ENCODE measurements at regions of chr3 and their contacts with region 1.

Region 1: GRCh38 chr3:187738331-187739093 is 6.8 kb downstream of the BCL6 start:
- DNase-seq: peak; percentile 82
- ATAC-seq: peak; percentile 25
- H3K4me3 Mint-ChIP-seq: peak overlapping the region; percentile 91
- H3K27ac Mint-ChIP-seq: peak overlapping the region; percentile 99
- H3K4me1 Mint-ChIP-seq: peaks cover 47% of the 10 kb centered on the region
- H3K27me3 Mint-ChIP-seq: no peaks in the 10 kb centered on the region

Region 2: DNA sequence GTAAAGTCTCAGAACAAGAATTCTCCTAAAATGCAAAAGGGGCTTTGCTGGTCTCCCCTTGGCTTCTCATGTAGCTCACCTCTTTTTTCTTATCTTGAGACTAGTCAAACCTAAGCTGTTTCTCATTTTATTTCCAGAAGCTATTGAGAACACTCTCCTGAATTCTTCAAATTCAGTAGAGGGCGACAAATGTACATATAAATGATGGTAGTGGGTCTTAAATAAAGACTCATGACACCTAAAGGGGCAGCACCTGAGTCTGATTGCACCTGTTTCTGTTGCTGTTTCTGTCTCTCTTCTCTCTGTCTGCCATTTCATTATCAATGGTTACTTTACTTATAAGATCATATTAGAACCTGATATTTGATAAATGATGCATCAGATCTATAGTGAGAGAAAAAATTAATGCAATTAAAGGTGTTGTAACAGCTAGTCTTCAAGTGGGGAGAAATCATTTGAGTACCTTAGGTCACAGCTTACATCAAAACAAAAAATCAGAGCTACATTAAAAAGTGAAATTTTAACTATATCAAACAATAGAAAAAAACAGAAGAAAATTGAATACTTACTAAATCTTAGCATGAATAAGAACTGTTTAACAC is 889.0 kb before region 1 on chr3:
- CTCF ChIA-PET with region 1: no interaction called
- POLR2A ChIA-PET with region 1: no interaction called
- intact Hi-C with region 1: no loop called
- DNase-seq: peak; percentile 32
- ATAC-seq: peak; percentile 90
- H3K4me3 Mint-ChIP-seq: no peak overlapping the region
- H3K27ac Mint-ChIP-seq: peak overlapping the region; percentile 52
- H3K4me1 Mint-ChIP-seq: peaks cover 18% of the 10 kb centered on the region
- H3K27me3 Mint-ChIP-seq: peaks cover 7% of the 10 kb centered on the region

Region 3: GRCh38 chr3:187974871-187975271 is 236.4 kb after region 1 on chr3:
- CTCF ChIA-PET with region 1: interaction called, 23 read pairs
- POLR2A ChIA-PET with region 1: interaction called, 15 read pairs
- intact Hi-C with region 1: loop called in 1 of 2 experiments (anchors 2 kb)
- DNase-seq: no peak
- ATAC-seq: peak; percentile 61
- H3K4me3 Mint-ChIP-seq: peak overlapping the region; percentile 57
- H3K27ac Mint-ChIP-seq: peak overlapping the region; percentile 90
- H3K4me1 Mint-ChIP-seq: peaks cover 57% of the 10 kb centered on the region
- H3K27me3 Mint-ChIP-seq: no peaks in the 10 kb centered on the region

Region 4: DNA sequence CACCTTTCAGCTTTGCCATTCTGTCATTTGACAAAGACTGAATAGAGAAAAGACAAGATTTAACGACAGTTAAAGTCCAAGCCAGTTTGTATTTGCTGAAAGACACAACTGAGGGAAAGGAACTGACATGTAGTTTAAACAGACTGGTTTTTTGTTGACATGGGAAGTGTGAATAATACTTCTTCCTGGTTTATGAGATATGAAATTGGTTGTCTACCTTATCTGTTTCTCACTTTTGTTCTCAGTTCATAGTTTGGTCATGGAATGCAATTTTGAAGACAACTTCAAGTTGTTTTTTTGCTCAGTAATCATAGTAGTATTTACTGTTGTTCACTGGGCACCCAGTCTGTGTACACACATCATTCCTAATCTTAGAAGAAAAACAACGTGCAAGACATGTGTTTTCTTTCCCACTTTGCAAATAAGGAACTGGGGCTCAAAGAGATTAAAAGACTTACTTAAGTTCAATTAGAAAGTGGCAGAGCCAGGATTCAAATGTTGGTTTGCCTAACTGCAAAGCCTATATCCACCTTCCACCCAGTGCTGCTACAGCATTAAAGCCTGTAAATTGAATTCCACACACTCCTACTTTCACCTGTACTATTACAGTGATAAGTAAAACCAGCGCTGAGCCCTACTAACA is 519.0 kb after region 1 on chr3:
- CTCF ChIA-PET with region 1: interaction called, 21 read pairs
- POLR2A ChIA-PET with region 1: interaction called, 7 read pairs
- intact Hi-C with region 1: loop called in 1 of 2 experiments (anchors 10 kb)
- DNase-seq: no peak
- ATAC-seq: peak; percentile 12
- H3K4me3 Mint-ChIP-seq: no peak overlapping the region
- H3K27ac Mint-ChIP-seq: peak overlapping the region; percentile 62
- H3K4me1 Mint-ChIP-seq: peaks cover 46% of the 10 kb centered on the region
- H3K27me3 Mint-ChIP-seq: no peaks in the 10 kb centered on the region

Region 5: DNA sequence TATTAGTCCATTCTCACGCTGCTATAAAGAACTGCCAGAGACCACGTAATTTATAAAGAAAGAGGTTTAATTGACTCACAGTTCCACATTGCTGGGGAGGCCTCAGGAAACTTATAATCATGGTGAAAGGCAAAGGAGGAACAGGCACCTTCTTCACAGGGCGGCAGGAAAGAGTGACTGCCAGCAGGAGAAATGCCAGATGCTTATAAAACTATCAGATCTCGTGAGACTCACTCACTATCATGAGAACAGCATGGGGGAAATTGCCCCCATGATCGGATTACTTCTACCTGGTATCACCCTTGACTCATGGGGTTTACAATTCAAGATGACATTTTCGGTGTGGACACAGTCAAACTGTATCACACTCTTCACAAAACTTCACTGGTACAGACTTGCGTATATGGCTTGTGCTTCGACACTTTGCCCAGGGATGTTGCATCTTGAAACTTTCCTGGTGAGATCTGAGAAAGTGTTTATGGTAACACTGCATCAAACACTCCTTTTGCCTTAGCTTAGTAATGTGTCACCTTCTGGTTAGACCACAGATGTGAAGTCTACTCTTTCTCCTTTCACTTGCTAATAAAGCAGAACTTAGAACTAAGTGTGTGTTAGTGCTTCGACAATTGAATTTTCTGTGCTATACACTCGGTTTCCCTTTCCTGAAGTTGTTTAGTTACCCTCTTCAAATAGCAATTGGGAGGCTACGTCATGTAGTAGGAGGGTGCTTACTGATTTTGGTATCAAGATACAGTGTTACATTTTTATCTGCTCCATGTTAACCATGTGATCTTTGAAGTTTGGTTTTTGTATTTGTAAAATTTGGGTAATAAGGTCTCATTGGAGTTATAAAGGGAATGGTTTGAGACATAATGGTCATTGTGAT is 601.1 kb after region 1 on chr3:
- CTCF ChIA-PET with region 1: interaction called, 13 read pairs
- POLR2A ChIA-PET with region 1: interaction called, 10 read pairs
- intact Hi-C with region 1: loop called in 1 of 2 experiments (anchors 1 kb)
- DNase-seq: peak; percentile 76
- ATAC-seq: peak; percentile 89
- H3K4me3 Mint-ChIP-seq: peak overlapping the region; percentile 54
- H3K27ac Mint-ChIP-seq: peak overlapping the region; percentile 95
- H3K4me1 Mint-ChIP-seq: peaks cover 43% of the 10 kb centered on the region
- H3K27me3 Mint-ChIP-seq: no peaks in the 10 kb centered on the region

Region 6: DNA sequence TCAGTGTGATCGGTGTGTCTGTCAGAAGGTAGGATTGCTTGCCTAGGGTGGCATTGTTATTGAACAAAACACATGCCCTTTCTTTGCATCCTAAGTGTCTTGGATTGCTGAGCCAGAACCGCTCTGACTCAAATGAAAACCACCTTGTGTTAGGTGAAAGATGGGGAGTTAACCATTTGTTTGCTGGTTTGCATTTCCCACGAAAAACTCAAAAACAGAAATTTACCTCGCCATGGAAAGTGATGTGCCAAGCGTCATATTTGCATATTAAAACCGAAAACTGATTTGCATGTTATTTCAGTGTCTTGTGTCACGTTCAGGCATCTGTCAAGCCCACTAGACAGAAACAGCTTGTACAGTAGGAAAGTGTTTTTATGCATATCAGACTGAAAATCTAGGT is 958.6 kb after region 1 on chr3:
- CTCF ChIA-PET with region 1: interaction called, 3 read pairs
- POLR2A ChIA-PET with region 1: no interaction called
- intact Hi-C with region 1: loop called in 1 of 2 experiments (anchors 2 kb)
- DNase-seq: peak; percentile 54
- ATAC-seq: peak; percentile 42
- H3K4me3 Mint-ChIP-seq: no peak overlapping the region
- H3K27ac Mint-ChIP-seq: no peak overlapping the region
- H3K4me1 Mint-ChIP-seq: peaks cover 47% of the 10 kb centered on the region
- H3K27me3 Mint-ChIP-seq: peaks cover 2% of the 10 kb centered on the region

Region 7: GRCh38 chr3:188830893-188831292 is 1092.4 kb after region 1 on chr3:
- CTCF ChIA-PET with region 1: interaction called, 3 read pairs
- POLR2A ChIA-PET with region 1: no interaction called
- intact Hi-C with region 1: loop called in 1 of 2 experiments (anchors 5 kb)
- DNase-seq: peak; percentile 13
- ATAC-seq: no peak
- H3K4me3 Mint-ChIP-seq: no peak overlapping the region
- H3K27ac Mint-ChIP-seq: no peak overlapping the region
- H3K4me1 Mint-ChIP-seq: peaks cover 26% of the 10 kb centered on the region
- H3K27me3 Mint-ChIP-seq: no peaks in the 10 kb centered on the region

Region 8: GRCh38 chr3:189233225-189233858 is 1494.8 kb after region 1 on chr3:
- CTCF ChIA-PET with region 1: interaction called, 4 read pairs
- POLR2A ChIA-PET with region 1: no interaction called
- intact Hi-C with region 1: loop called in 1 of 2 experiments (anchors 2 kb)
- DNase-seq: peak; percentile 54
- ATAC-seq: peak; percentile 40
- H3K4me3 Mint-ChIP-seq: no peak overlapping the region
- H3K27ac Mint-ChIP-seq: no peak overlapping the region
- H3K4me1 Mint-ChIP-seq: peaks cover 27% of the 10 kb centered on the region
- H3K27me3 Mint-ChIP-seq: peaks cover 2% of the 10 kb centered on the region

Measured in activated CD4-positive, alpha-beta T cell treated with anti-CD3 and anti-CD28 coated beads for 36 hours (primary cell).